Left ventricle myocardium superior (tissue), 1 donor: ENCODE measurements at regions of chr17 and their contacts with region 1.

Region 1: GRCh38 chr17:79915850-79916430 is 76.7 kb upstream of the CBX4 start:
- DNase-seq: no peak
- ATAC-seq: peak; percentile 24

Region 2: GRCh38 chr17:79558091-79558895 is 357.6 kb before region 1 on chr17:
- intact Hi-C with region 1: no loop called
- DNase-seq: no peak
- ATAC-seq: no peak

Region 3: DNA sequence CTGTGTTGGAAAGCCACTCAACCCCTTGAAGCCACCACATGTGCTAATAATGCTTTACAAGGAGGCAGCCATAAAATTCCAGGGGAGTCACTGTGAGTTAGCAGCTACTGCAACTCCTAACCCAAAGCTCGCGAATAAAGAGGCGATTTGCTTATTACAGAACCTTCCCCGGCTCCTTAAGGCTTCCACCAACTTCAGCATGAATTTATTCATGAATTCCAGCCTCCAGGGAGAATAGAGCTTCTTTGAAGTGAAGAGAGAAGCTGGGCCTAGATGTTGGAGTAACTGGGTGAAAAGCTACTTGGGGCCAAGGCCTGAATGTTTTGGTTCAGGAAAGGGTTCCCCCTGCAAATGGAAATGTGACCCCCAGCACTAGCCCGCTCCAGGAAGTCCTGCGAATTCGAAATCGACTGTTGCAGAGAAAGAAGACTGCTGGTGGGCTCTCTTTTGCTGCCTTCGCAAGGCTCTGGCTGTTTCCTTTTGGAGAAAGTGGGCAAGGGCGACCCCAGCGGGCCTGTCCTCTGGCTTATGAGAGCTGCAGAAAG is 126.9 kb before region 1 on chr17:
- intact Hi-C with region 1: no loop called
- DNase-seq: no peak
- ATAC-seq: no peak

Region 4: DNA sequence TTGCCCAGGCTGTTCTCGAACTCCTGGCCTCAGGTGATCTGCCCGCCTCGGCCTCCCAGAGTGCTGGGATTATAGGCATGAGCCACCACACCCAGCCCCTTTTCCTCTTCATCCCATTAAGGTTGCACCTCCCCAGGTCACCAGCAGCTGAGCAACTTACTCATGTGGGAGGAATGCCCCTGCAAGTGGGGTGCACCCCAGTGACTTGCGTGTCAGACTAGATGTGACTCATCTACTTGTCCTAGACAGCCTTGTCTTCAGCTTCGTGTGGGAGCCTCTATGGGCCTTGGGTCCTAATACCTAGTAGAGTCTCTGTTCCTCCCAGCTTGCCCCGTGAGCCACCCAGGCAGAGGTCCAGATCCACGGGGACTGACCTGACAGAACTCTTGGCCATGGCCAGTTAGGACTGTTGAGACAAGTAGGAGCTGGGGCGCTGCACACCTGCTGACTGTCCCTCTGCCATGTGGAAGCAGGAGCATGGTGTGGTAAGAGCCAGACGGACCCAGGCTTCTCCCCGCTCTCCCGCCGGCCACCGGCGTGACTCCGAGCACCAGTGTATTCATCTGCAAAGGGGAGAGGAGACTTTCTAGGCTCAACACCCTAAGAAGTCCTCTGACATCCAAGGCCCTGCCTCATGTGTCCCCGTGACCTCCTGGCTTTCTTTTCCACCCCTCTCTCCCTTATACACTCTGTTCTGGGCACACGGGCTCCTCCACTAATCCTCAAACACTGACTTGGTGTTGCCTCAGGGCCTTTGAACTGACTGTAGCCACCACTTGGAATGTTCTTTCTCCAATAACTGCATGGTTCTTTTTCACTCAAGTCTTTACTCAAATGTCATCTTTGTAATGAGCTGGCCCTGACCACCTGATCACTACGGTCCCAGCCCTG is 65.1 kb before region 1 on chr17:
- intact Hi-C with region 1: loop called (anchors 10 kb)
- DNase-seq: no peak
- ATAC-seq: no peak